Common myeloid progenitor, CD34-positive (primary cell): ENCODE measurements at regions of chr16 and their contacts with region 1.

Region 1: GRCh38 chr16:10964039-10964890 is 19.9 kb downstream of the CLEC16A start:
- DNase-seq: peak; percentile 79 to 91 (median 89)
- H3K4me3 ChIP-seq: peak overlapping the region in 1 of 7 experiments; percentile 22
- H3K27ac ChIP-seq: no peak overlapping the region
- H3K4me1 ChIP-seq: peaks cover 2 to 35% (median 16%) of the 10 kb centered on the region in 4 experiments
- H3K27me3 ChIP-seq: no peaks in the 10 kb centered on the region

Region 2: DNA sequence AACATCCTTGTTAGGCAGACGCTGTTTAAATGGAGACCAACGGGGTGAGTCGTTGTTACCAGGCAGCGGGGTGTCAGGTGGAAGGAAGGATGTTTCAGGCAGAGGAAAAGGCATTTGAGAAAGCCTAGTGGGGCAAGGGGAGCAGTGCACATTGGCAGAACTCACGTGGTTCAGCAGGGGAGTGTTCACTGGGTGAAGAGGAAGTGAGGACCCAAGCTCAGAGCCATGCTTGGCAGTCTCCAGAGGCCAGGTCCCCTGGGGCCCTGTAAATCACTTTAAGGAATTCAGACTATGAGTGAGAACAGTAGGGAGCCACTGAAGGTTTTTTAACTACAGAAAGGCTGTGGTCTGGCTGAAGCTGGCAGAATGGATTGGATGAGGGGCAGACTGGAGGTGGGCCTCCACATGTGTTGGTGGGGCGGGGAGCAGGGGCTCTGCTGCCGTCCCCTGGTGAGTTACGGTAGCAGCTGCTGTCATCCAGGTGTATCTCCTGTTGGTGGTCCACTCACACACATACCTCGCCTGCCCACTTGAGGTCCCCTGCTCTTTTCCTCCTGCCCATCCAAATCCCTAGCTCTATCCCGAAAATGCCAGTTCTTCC is 14.8 kb before region 1 on chr16:
- CTCF ChIA-PET with region 1: interaction called, 118 read pairs
- POLR2A ChIA-PET with region 1: interaction called, 6 read pairs
- DNase-seq: peak; percentile 73 to 91 (median 88)
- H3K4me3 ChIP-seq: no peak overlapping the region
- H3K27ac ChIP-seq: no peak overlapping the region
- H3K4me1 ChIP-seq: peaks cover 8 to 41% (median 31%) of the 10 kb centered on the region in 4 experiments
- H3K27me3 ChIP-seq: no peaks in the 10 kb centered on the region

Region 3: GRCh38 chr16:11370084-11370931 is 406.0 kb after region 1 on chr16:
- CTCF ChIA-PET with region 1: interaction called, 17 read pairs
- POLR2A ChIA-PET with region 1: no interaction called
- DNase-seq: peak; percentile 61 to 93 (median 92)
- H3K4me3 ChIP-seq: no peak overlapping the region
- H3K27ac ChIP-seq: no peak overlapping the region
- H3K4me1 ChIP-seq: peaks cover 0 to 17% (median 5%) of the 10 kb centered on the region in 4 experiments
- H3K27me3 ChIP-seq: peaks cover 0 to 7% (median 0%) of the 10 kb centered on the region in 5 experiments